K562 (cell line): ENCODE measurements at regions of chr4 and their contacts with region 1.

Region 1: GRCh38 chr4:165493359-165493758 is 114.6 kb downstream of the CPE start:
- DNase-seq: peak; percentile 50 to 82 (median 58)
- ATAC-seq: peak; percentile 100
- H3K4me3 ChIP-seq: no peak overlapping the region
- H3K27ac ChIP-seq: no peak overlapping the region
- H3K4me1 ChIP-seq: no peaks in the 10 kb centered on the region; a peak in 1 of 5 replicates
- H3K27me3 ChIP-seq: no peaks in the 10 kb centered on the region
- CTCF ChIP-seq: peak; percentile 82 to 93 (median 84)
- EP300 ChIP-seq: no peak
- POLR2A ChIP-seq: no peak
- RAD21 ChIP-seq: peak; percentile 89

Region 2: GRCh38 chr4:165537028-165537648 is 43.8 kb after region 1 on chr4:
- CTCF ChIA-PET with region 1: no interaction called
- POLR2A ChIA-PET with region 1: no interaction called
- in situ Hi-C with region 1: no loop called
- intact Hi-C with region 1: loop called (anchors 1 kb)
- DNase-seq: peak; percentile 35 to 57 (median 46)
- ATAC-seq: peak; percentile 81
- H3K4me3 ChIP-seq: no peak overlapping the region
- H3K27ac ChIP-seq: no peak overlapping the region
- H3K4me1 ChIP-seq: no peaks in the 10 kb centered on the region
- H3K27me3 ChIP-seq: no peaks in the 10 kb centered on the region; a peak in 2 of 5 replicates
- CTCF ChIP-seq: peak; percentile 36 to 62 (median 55); a peak in 5 of 6 replicates
- EP300 ChIP-seq: no peak
- POLR2A ChIP-seq: no peak
- RAD21 ChIP-seq: peak; percentile 68 to 75

Region 3: GRCh38 chr4:165700855-165701254 is 207.5 kb after region 1 on chr4:
- CTCF ChIA-PET with region 1: no interaction called
- POLR2A ChIA-PET with region 1: no interaction called
- in situ Hi-C with region 1: no loop called
- intact Hi-C with region 1: loop called (anchors 5 kb)
- DNase-seq: peak in 1 of 4 experiments; percentile 6
- ATAC-seq: 0 out of 3 replicates have a peak, but pooled peaks have one; percentile 32
- H3K4me3 ChIP-seq: no peak overlapping the region
- H3K27ac ChIP-seq: no peak overlapping the region
- H3K4me1 ChIP-seq: no peaks in the 10 kb centered on the region
- H3K27me3 ChIP-seq: no peaks in the 10 kb centered on the region
- CTCF ChIP-seq: no peak
- EP300 ChIP-seq: no peak
- POLR2A ChIP-seq: no peak
- RAD21 ChIP-seq: no peak

Region 4: DNA sequence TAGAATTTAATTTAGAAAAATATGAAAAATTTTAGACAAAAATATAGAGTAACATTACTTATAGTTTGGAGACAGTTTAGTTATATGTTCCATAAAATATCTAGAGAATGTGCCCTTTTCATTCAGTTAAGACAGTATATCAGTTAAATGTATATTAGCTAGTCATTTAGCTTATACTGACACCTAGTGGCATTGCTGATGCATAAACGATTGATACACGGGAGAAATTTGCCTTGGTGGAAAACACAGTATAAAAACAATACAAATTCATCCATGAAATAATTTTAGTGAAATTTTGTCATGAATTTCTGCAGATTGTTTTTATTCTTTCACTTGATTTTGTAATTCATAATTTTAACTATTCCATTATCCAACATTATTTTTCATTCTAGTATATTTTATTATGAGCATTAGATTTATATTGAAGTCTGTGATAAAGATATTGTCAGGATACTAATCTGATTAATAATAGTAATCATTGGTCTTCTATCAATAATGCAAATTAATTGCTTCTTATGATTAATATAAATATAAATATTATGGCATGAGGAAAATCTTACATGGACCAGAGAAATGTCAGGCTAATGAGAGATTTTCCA is 598.7 kb after region 1 on chr4:
- CTCF ChIA-PET with region 1: interaction called, 6 read pairs
- POLR2A ChIA-PET with region 1: no interaction called
- in situ Hi-C with region 1: no loop called
- intact Hi-C with region 1: loop called (anchors 1 kb)
- DNase-seq: peak; percentile 13 to 48 (median 16)
- ATAC-seq: peak; percentile 71; the same call in 2 of the 3 replicates
- H3K4me3 ChIP-seq: no peak overlapping the region
- H3K27ac ChIP-seq: no peak overlapping the region
- H3K4me1 ChIP-seq: no peaks in the 10 kb centered on the region
- H3K27me3 ChIP-seq: no peaks in the 10 kb centered on the region
- CTCF ChIP-seq: peak; percentile 31 to 71 (median 40); a peak in 4 of 6 replicates
- EP300 ChIP-seq: no peak
- POLR2A ChIP-seq: no peak
- RAD21 ChIP-seq: peak; percentile 73 to 74